GM18951 (cell line): ENCODE measurements at regions of chr11 and their contacts with region 1.

Region 1: GRCh38 chr11:19071255-19071654 is 10.7 kb upstream of the MRGPRX2 start:
- POLR2A ChIP-seq: no peak

Region 2: GRCh38 chr11:19187114-19187832 is 116.0 kb after region 1 on chr11:
- in situ Hi-C with region 1: no loop called
- POLR2A ChIP-seq: no peak

Region 3: GRCh38 chr11:19546325-19546724 is 475.1 kb after region 1 on chr11:
- in situ Hi-C with region 1: loop called (anchors 10 kb)
- POLR2A ChIP-seq: no peak